Activated naive CD8-positive, alpha-beta T cell treated with anti-CD3 and anti-CD28 coated beads, Interleukin-2, amount 10 ng/mL, durations not matched to agents 7 days and 5 days (primary cell): ENCODE measurements at regions of chr15 and their contacts with region 1.

Region 1: DNA sequence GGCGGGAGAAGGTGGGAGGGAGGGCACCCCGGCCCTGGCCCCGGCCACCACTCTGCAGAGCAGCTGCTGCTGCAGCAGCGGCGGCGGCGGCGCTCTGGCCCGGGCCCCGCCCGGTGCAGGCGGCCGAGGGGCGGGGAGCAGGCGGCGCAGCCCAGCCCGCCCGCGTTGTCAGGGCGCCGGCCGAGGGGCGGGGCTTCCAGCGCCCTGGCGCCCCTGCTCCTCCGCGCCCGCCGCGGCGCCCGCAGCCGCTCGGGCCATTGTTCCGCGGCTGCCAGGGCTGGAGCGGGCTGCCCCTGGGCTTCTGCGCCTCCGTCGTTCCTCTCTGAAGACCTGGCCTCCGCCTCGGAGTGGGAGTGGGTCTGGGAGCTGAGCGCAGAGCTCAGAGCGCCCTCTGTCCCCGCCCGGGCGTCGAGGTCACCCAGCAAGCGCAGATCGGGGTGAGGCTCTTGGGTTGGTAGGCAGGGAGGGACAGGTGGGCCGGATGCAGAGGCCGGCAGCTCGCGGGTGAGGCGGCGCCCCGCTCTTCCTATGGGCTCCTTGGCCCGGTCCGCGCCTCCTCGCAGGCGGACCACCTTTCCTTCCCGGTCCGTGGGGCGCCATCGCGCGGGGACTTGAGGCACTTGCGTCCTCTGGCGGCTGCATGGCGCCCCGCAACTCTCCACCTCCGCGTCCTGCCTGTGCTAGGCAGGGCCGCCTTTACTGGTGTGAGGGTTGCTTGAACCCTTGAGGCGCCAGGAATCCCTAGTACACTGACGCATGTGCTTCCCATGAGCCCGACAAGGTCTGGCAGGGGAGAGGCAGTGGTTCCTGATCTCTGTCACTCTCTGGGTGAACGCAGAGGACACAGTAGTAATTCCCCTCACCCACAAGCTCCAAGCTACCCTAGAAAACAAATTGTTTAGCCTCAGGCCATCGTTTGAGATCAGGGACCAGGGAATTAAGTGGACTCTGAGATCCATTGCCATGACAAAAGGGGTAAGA is at the start of gene LPCAT4:
- DNase-seq: peak; percentile 95
- ATAC-seq: peak; percentile 90
- H3K4me3 Mint-ChIP-seq: peak within 1 kb of the TSS; percentile 98
- H3K27ac Mint-ChIP-seq: peak within 1 kb of the TSS; percentile 97
- H3K4me1 Mint-ChIP-seq: peaks cover 27% of the 10 kb centered on the region
- H3K27me3 Mint-ChIP-seq: peaks cover 3% of the 10 kb centered on the region
- total RNA-seq, gene LPCAT4: 112 to 119 TPM

Region 2: DNA sequence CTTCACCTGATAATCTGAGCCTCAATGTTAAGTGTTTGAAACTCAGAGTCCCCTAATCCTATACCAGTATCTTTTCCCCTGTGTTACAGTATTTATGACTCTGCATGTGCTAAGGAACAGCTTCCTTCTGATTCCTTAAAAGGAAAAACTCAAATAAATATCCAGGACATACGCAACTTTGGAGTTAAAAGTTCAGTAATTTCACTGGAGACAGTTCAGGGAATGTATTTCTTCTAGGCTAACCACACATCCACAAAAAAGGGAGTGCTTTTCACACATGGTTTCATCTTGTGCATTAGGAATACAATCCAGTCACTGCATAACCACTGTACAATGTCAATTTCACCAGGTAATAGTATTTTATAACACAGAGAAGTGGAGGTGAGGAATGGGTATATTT is 234.5 kb before region 1 on chr15:
- POLR2A ChIA-PET with region 1: no interaction called
- DNase-seq: no peak
- ATAC-seq: no peak
- H3K4me3 Mint-ChIP-seq: no peak overlapping the region
- H3K27ac Mint-ChIP-seq: no peak overlapping the region
- H3K4me1 Mint-ChIP-seq: no peaks in the 10 kb centered on the region
- H3K27me3 Mint-ChIP-seq: peaks cover 3% of the 10 kb centered on the region

Region 3: GRCh38 chr15:34217587-34218225 is 149.7 kb before region 1 on chr15:
- POLR2A ChIA-PET with region 1: no interaction called
- DNase-seq: no peak
- ATAC-seq: no peak
- H3K4me3 Mint-ChIP-seq: no peak overlapping the region
- H3K27ac Mint-ChIP-seq: no peak overlapping the region
- H3K4me1 Mint-ChIP-seq: peaks cover 3% of the 10 kb centered on the region
- H3K27me3 Mint-ChIP-seq: peaks cover 19% of the 10 kb centered on the region

Region 4: GRCh38 chr15:34241372-34242330 is 125.7 kb before region 1 on chr15:
- POLR2A ChIA-PET with region 1: interaction called, 11 read pairs
- DNase-seq: no peak
- ATAC-seq: peak; percentile 62
- H3K4me3 Mint-ChIP-seq: no peak overlapping the region
- H3K27ac Mint-ChIP-seq: no peak overlapping the region
- H3K4me1 Mint-ChIP-seq: peaks cover 16% of the 10 kb centered on the region
- H3K27me3 Mint-ChIP-seq: no peaks in the 10 kb centered on the region

Region 5: DNA sequence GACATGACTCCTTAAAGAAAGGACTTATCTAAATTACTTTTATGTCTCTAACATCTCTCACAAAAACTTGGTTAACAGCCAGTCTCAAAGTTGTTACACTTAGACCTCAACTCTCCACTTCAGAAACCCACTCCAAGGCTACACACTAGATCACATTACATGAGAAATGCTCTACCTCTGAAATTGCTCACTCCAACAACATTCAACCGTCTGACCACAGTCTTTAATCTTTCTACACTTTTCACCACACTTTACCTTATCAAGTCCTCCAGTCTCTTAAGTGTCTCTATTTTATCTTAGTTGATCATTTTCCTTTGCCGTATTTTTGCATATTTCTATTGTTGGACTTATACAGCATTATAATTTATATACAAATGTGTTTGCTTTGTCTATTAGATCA is 35.6 kb before region 1 on chr15:
- POLR2A ChIA-PET with region 1: interaction called, 39 read pairs
- DNase-seq: no peak
- ATAC-seq: peak; percentile 68
- H3K4me3 Mint-ChIP-seq: peak overlapping the region; percentile 45
- H3K27ac Mint-ChIP-seq: peak overlapping the region; percentile 83
- H3K4me1 Mint-ChIP-seq: peaks cover 64% of the 10 kb centered on the region
- H3K27me3 Mint-ChIP-seq: no peaks in the 10 kb centered on the region

Region 6: DNA sequence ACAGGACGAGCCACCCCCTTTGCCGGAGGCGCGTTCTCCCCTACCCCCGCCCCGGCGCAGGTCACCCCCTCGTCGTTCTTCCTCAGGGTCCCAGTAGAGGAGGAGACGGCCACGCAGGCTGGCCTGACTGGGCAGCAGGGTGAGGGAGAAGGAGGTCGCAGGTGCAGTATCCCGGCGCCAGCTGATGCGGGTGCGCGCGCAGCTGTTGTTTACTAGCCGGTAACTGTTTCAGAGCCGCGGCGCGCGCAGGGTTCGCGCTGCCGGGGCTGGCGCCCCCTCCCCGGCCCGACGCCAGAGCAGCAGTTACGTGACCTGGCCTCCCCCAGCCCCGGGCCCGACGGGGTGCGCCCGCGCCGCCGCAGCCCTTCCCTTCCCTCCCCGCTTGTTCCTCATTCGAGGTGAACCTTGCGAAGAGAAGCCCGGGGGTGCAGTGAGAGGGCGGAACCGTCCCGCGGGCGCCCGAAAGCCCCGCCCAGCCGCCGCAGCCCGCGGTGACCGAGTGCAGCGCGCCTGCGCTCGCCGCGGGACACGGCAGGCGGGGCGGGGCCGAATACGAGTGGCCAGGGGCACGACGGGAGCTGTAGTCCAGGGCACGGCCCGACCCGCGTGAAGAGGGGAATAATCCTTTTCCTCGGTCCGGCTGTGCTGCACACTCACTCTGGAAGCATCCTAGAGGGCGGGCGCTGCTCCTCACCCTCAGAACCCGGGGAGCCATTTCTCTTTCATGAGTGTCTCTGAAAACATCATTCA is 29.7 kb before region 1 on chr15 and contains the start of gene SLC12A6:
- POLR2A ChIA-PET with region 1: interaction called, 39 read pairs
- DNase-seq: peak; percentile 98
- ATAC-seq: peak; percentile 84
- H3K4me3 Mint-ChIP-seq: peak within 1 kb of the TSS; percentile 96
- H3K27ac Mint-ChIP-seq: peak within 1 kb of the TSS; percentile 99
- H3K4me1 Mint-ChIP-seq: peaks cover 40% of the 10 kb centered on the region
- H3K27me3 Mint-ChIP-seq: no peaks in the 10 kb centered on the region
- total RNA-seq, gene SLC12A6: 42.0 to 44.9 TPM

Region 7: GRCh38 chr15:34342737-34343575 is 24.4 kb before region 1 on chr15 and contains the starts of genes NOP10 and NUTM1:
- POLR2A ChIA-PET with region 1: interaction called, 39 read pairs
- DNase-seq: peak; percentile 97
- ATAC-seq: peak; percentile 84
- H3K4me3 Mint-ChIP-seq: no peak within 1 kb of the TSS
- H3K27ac Mint-ChIP-seq: peak within 1 kb of the TSS; percentile 87
- H3K4me1 Mint-ChIP-seq: peaks cover 14% of the 10 kb centered on the region
- H3K27me3 Mint-ChIP-seq: no peaks in the 10 kb centered on the region
- total RNA-seq, gene NOP10: 142 to 143 TPM
- total RNA-seq, gene NUTM1: not detected

Region 8: GRCh38 chr15:34437687-34438086 is 70.3 kb after region 1 on chr15 and contains the start of gene GOLGA8A:
- POLR2A ChIA-PET with region 1: interaction called, 15 read pairs
- DNase-seq: peak; percentile 84
- ATAC-seq: peak; percentile 77
- H3K4me3 Mint-ChIP-seq: peak within 1 kb of the TSS; percentile 95
- H3K27ac Mint-ChIP-seq: peak within 1 kb of the TSS; percentile 96
- H3K4me1 Mint-ChIP-seq: peaks cover 22% of the 10 kb centered on the region
- H3K27me3 Mint-ChIP-seq: peaks cover 18% of the 10 kb centered on the region
- total RNA-seq, gene GOLGA8A: 307 to 311 TPM

Region 9: GRCh38 chr15:34456658-34457057 is 89.3 kb after region 1 on chr15:
- POLR2A ChIA-PET with region 1: no interaction called
- DNase-seq: no peak
- ATAC-seq: no peak
- H3K4me3 Mint-ChIP-seq: no peak overlapping the region
- H3K27ac Mint-ChIP-seq: no peak overlapping the region
- H3K4me1 Mint-ChIP-seq: no peaks in the 10 kb centered on the region
- H3K27me3 Mint-ChIP-seq: peaks cover 65% of the 10 kb centered on the region

Region 10: GRCh38 chr15:34583399-34584329 is 216.3 kb after region 1 on chr15 and contains the start of gene GOLGA8B:
- POLR2A ChIA-PET with region 1: interaction called, 27 read pairs
- DNase-seq: peak; percentile 88
- ATAC-seq: peak; percentile 72
- H3K4me3 Mint-ChIP-seq: peak within 1 kb of the TSS; percentile 92
- H3K27ac Mint-ChIP-seq: peak within 1 kb of the TSS; percentile 90
- H3K4me1 Mint-ChIP-seq: peaks cover 31% of the 10 kb centered on the region
- H3K27me3 Mint-ChIP-seq: peaks cover 24% of the 10 kb centered on the region
- total RNA-seq, gene GOLGA8B: 371 to 410 TPM